ENCODE measurements at regions of chr1 and their contacts with region 1.

Region 1: GRCh38 chr1:113928941-113929749 is at the start of gene HIPK1:
- DNase-seq: peak; percentile 85 to 95 (median 92)
- ATAC-seq: peak; percentile 66 to 78 (median 75)
- H3K4me3 ChIP-seq: peak within 1 kb of the TSS; percentile 93 to 98
- H3K4me3 Mint-ChIP-seq: peak within 1 kb of the TSS; percentile 89 to 97 (median 96)
- H3K27ac ChIP-seq: peak within 1 kb of the TSS; percentile 95
- H3K27ac Mint-ChIP-seq: peak within 1 kb of the TSS; percentile 99
- H3K4me1 ChIP-seq: peaks cover 28 to 34% of the 10 kb centered on the region in 2 experiments
- H3K4me1 Mint-ChIP-seq: peaks cover 52 to 61% (median 54%) of the 10 kb centered on the region in 3 donors
- H3K27me3 ChIP-seq: no peaks in the 10 kb centered on the region
- H3K27me3 Mint-ChIP-seq: no peaks in the 10 kb centered on the region
- total RNA-seq, gene HIPK1: 99.5 to 189 (median 103) TPM

Region 2: GRCh38 chr1:112818990-112819689 is 1110.0 kb before region 1 on chr1:
- CTCF ChIA-PET with region 1: no interaction called
- POLR2A ChIA-PET with region 1: no interaction called
- DNase-seq: no peak
- ATAC-seq: peak in 1 of 4 experiments; percentile 19
- H3K4me3 ChIP-seq: no peak overlapping the region
- H3K4me3 Mint-ChIP-seq: no peak overlapping the region
- H3K27ac ChIP-seq: no peak overlapping the region
- H3K27ac Mint-ChIP-seq: no peak overlapping the region
- H3K4me1 ChIP-seq: peaks cover 0 to 4% of the 10 kb centered on the region in 2 experiments
- H3K4me1 Mint-ChIP-seq: peaks cover 0 to 4% (median 2%) of the 10 kb centered on the region in 3 donors
- H3K27me3 ChIP-seq: peaks cover 0 to 7% of the 10 kb centered on the region in 2 experiments
- H3K27me3 Mint-ChIP-seq: peaks cover 0 to 3% of the 10 kb centered on the region in 2 donors

Region 3: DNA sequence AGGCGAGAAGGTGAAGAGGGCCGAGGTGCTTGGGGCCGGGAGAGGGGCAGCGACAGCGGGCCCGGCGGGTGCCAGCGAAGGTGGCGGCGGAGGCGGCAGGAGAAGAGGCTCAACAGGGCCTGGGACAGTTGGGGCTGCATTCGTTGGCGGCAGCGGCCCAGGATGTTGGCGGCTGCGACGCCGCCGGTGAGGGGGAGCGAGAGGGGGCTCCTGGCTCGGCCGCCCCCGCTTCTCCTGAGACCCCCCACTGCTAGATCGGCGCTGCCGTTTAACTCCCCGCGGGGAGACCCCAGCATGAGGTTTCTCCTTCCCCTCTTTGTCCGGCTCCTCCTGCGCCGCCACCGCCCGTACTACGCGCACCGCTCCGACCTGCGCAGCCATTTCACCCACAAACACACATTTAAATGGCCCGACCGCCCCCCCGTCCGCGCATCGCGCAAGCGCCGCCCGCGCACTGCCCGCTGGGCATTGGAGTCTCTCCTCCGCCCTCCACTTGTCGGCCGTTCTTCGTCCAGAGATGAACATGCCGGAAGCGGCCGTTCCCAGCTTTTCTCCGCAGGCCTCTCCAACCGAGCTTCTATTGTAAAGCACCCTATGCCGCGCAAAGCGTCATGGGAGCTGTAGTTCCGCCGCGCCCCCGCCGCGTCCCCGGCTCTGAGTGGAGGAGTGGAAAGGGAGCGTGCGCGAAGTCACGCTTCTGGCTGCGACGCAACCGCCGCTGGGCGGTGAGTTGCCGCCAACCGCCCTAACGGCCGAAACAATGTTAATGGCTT is 117.1 kb before region 1 on chr1 and contains the start of gene RSBN1:
- CTCF ChIA-PET with region 1: interaction called in 1 of 2 experiments, 8 read pairs
- POLR2A ChIA-PET with region 1: interaction called in 1 of 2 experiments, 47 read pairs
- DNase-seq: peak; percentile 94 to 99 (median 98)
- ATAC-seq: peak; percentile 93 to 95 (median 94)
- H3K4me3 ChIP-seq: peak within 1 kb of the TSS; percentile 84 to 92
- H3K4me3 Mint-ChIP-seq: peak within 1 kb of the TSS; percentile 98 to 99 (median 99)
- H3K27ac ChIP-seq: peak within 1 kb of the TSS; percentile 90
- H3K27ac Mint-ChIP-seq: peak within 1 kb of the TSS; percentile 98
- H3K4me1 ChIP-seq: peaks cover 11 to 34% of the 10 kb centered on the region in 2 experiments
- H3K4me1 Mint-ChIP-seq: peaks cover 37 to 43% (median 39%) of the 10 kb centered on the region in 3 donors
- H3K27me3 ChIP-seq: no peaks in the 10 kb centered on the region
- H3K27me3 Mint-ChIP-seq: no peaks in the 10 kb centered on the region
- total RNA-seq, gene RSBN1: 43.9 to 49.9 (median 45.1) TPM

Region 4: GRCh38 chr1:113850080-113850803 is 78.9 kb before region 1 on chr1:
- CTCF ChIA-PET with region 1: interaction called in 1 of 2 experiments, 3 read pairs
- POLR2A ChIA-PET with region 1: interaction called in 1 of 2 experiments, 11 read pairs
- DNase-seq: peak in 1 of 35 experiments; percentile 32
- ATAC-seq: peak in 2 of 4 experiments; percentile 46 to 67
- H3K4me3 ChIP-seq: no peak overlapping the region
- H3K4me3 Mint-ChIP-seq: peak overlapping the region in 1 of 3 donors; percentile 30
- H3K27ac ChIP-seq: peak overlapping the region; percentile 54
- H3K27ac Mint-ChIP-seq: peak overlapping the region; percentile 73 to 77
- H3K4me1 ChIP-seq: peaks cover 3 to 11% of the 10 kb centered on the region in 2 experiments
- H3K4me1 Mint-ChIP-seq: peaks cover 13 to 16% (median 14%) of the 10 kb centered on the region in 3 donors
- H3K27me3 ChIP-seq: no peaks in the 10 kb centered on the region
- H3K27me3 Mint-ChIP-seq: no peaks in the 10 kb centered on the region

Region 5: GRCh38 chr1:113940365-113941244 is 11.5 kb after region 1 on chr1:
- CTCF ChIA-PET with region 1: interaction called, 5 to 86 read pairs
- POLR2A ChIA-PET with region 1: interaction called, 59 to 221 read pairs
- DNase-seq: peak in 30 of 35 experiments; percentile 11 to 73 (median 30)
- ATAC-seq: peak; percentile 64 to 72 (median 65)
- H3K4me3 ChIP-seq: peak overlapping the region in 1 of 2 donors; percentile 53
- H3K4me3 Mint-ChIP-seq: peak overlapping the region; percentile 69 to 90 (median 77)
- H3K27ac ChIP-seq: peak overlapping the region; percentile 68
- H3K27ac Mint-ChIP-seq: peak overlapping the region; percentile 92 to 98
- H3K4me1 ChIP-seq: peaks cover 50 to 52% of the 10 kb centered on the region in 2 experiments
- H3K4me1 Mint-ChIP-seq: peaks cover 80 to 82% (median 81%) of the 10 kb centered on the region in 3 donors
- H3K27me3 ChIP-seq: no peaks in the 10 kb centered on the region
- H3K27me3 Mint-ChIP-seq: no peaks in the 10 kb centered on the region

Region 6: GRCh38 chr1:113957984-113958680 is 29.0 kb after region 1 on chr1:
- CTCF ChIA-PET with region 1: interaction called, 3 to 34 read pairs
- POLR2A ChIA-PET with region 1: interaction called, 21 to 25 read pairs
- DNase-seq: no peak
- ATAC-seq: no peak
- H3K4me3 ChIP-seq: no peak overlapping the region
- H3K4me3 Mint-ChIP-seq: no peak overlapping the region
- H3K27ac ChIP-seq: no peak overlapping the region
- H3K27ac Mint-ChIP-seq: peak overlapping the region in 1 of 2 donors; percentile 48
- H3K4me1 ChIP-seq: peaks cover 0 to 5% of the 10 kb centered on the region in 2 experiments
- H3K4me1 Mint-ChIP-seq: peaks cover 32 to 42% (median 33%) of the 10 kb centered on the region in 3 donors
- H3K27me3 ChIP-seq: no peaks in the 10 kb centered on the region
- H3K27me3 Mint-ChIP-seq: no peaks in the 10 kb centered on the region

Region 7: DNA sequence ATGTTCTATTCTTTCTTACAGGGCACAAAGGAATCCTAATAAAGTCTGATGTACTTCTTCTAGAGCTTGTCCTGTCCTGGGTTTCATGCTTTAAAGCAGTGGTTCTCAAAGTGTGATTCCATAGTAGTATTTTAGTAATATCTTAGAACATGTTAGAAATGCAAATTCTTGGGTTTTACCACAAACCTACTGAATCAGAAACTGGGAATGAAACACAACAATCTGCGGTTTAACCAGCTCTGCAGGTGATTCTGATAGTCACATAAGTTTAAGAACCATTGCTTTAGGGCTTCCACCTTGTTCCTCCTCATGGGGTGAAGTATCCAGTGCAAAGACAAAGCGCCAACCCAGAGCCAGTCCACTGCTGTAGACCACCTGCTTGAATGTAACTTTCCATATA is 1367.8 kb after region 1 on chr1:
- CTCF ChIA-PET with region 1: no interaction called
- POLR2A ChIA-PET with region 1: no interaction called
- DNase-seq: no peak
- ATAC-seq: no peak
- H3K4me3 ChIP-seq: no peak overlapping the region
- H3K4me3 Mint-ChIP-seq: no peak overlapping the region
- H3K27ac ChIP-seq: no peak overlapping the region
- H3K27ac Mint-ChIP-seq: no peak overlapping the region
- H3K4me1 ChIP-seq: no peaks in the 10 kb centered on the region
- H3K4me1 Mint-ChIP-seq: no peaks in the 10 kb centered on the region
- H3K27me3 ChIP-seq: peaks cover 0 to 9% of the 10 kb centered on the region in 2 experiments
- H3K27me3 Mint-ChIP-seq: peaks cover 2 to 11% of the 10 kb centered on the region in 2 donors